Activated B cell treated with CpG ODN at 0.5 μM for 24 hours (primary cell): ENCODE measurements at regions of chr17 and their contacts with region 1.

Region 1: DNA sequence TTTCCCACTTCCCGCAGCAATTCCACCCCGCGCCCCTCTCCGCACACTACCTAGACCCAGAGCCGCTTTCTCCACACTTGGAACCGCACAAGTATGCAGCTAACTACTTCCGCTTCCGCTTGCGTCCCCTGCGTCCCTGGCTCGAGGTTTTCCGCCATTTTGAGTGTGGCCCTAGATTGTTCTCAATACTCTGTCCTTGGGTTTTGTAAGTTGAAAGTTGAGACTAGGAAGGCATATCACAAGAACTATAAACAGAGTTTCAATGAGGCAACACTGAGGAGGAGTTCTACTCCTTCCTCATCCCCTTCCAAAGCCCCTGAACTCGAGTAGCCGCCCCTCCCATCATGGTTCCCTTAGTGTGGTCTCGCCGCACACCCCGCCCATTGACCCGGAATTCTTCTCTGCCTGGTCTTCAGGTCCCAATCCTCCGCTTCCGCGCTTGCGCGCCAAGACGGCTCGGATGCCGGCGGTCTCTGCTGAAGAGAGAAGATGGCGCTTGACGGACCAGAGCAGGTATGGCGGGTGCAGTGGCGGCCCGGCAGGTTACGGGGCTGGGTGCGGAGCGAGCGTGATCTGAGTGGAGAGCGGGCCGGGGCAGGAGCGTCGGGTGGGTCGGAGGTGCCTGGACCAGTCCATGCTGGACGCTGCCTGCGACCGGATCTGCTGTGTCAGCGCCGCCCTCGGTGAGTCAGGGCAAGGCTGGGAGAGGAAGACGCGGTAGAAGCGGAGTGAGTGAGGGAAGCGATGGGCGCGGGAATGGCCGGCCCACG is at the starts of genes FTSJ3 and PSMC5:
- DNase-seq: peak; percentile 90
- ATAC-seq: peak; percentile 95
- H3K4me3 Mint-ChIP-seq: peak within 1 kb of the TSS; percentile 98
- H3K27ac Mint-ChIP-seq: peak within 1 kb of the TSS; percentile 100
- H3K4me1 Mint-ChIP-seq: peaks cover 75% of the 10 kb centered on the region
- H3K27me3 Mint-ChIP-seq: no peaks in the 10 kb centered on the region
- CTCF ChIP-seq: no peak
- total RNA-seq, gene FTSJ3: 82.0 and 85.1 TPM in 2 replicates
- total RNA-seq, gene PSMC5: 157 TPM in 2 replicates

Region 2: DNA sequence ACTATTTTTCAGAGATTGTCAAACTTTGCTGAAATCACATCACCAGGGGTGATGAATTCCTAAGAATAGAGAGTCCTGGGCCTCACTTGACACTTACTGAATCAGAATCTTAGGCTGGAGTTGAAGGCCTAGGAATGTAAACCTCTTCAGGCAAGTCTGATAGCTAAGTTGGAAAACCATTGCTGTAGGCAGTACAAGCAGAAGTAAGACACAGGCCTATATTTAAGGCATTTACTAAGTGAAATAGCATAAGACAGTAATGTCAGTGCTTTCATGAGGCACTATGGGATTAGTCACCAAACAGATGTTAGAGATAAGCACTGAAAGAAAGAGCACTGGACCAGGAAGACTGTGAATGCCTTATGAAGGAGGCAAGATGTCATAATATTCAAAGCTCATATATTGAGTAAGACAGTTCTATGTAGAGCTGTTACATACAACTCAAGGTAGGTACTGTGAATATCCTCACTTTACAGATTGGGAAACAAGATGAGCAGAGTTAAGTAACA is 255.4 kb before region 1 on chr17:
- CTCF ChIA-PET with region 1: no interaction called
- POLR2A ChIA-PET with region 1: no interaction called
- intact Hi-C with region 1: no loop called
- DNase-seq: no peak
- ATAC-seq: no peak
- H3K4me3 Mint-ChIP-seq: no peak overlapping the region
- H3K27ac Mint-ChIP-seq: no peak overlapping the region
- H3K4me1 Mint-ChIP-seq: peaks cover 23% of the 10 kb centered on the region
- H3K27me3 Mint-ChIP-seq: no peaks in the 10 kb centered on the region
- CTCF ChIP-seq: no peak

Region 3: DNA sequence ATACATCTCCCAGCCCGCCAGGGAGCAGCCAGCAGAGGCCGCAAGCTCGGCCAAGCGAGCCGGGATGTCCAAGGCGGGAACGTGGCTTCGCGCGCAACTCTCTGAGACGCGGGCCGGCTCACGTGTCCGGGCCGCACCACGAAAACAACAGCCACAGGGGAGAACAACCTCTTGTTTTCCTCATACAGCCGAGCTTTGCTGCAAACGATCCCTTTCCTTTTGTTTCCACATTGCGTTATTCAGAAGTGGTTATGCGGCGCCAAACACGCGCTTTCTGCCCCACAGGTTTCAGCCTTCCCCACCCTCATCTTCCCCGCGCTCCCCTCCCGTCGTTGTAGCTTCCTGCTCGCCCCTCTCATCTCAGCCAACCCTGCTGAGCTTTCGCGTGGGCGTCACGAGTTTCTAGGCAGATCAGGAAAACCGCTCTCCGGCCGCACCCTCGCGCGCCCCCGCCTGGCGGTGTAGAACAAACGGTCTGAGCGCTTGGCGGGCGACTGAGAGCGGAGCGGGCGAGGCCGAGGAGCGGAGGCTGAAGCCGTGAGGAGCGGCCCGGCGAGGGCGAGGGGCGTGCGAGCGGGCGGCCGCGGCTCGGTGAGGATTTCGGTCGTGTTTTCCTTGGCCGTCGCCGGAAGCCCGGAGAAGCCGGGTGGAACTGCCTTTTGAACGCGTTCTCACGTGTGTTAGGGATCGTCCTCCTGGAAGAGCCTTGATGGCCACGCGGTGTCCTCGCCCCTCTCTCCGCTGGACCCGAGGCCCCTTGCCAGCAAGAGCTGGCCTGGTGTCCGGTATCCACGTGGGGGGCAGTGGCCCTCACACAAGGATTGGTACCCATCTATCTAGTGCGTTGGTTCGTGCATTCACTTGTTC is 21.9 kb after region 1 on chr17:
- CTCF ChIA-PET with region 1: interaction called, 5 read pairs
- POLR2A ChIA-PET with region 1: interaction called, 112 read pairs
- intact Hi-C with region 1: no loop called
- DNase-seq: peak; percentile 92
- ATAC-seq: peak; percentile 98
- H3K4me3 Mint-ChIP-seq: peak overlapping the region; percentile 82
- H3K27ac Mint-ChIP-seq: peak overlapping the region; percentile 89
- H3K4me1 Mint-ChIP-seq: peaks cover 21% of the 10 kb centered on the region
- H3K27me3 Mint-ChIP-seq: no peaks in the 10 kb centered on the region
- CTCF ChIP-seq: no peak

Region 4: GRCh38 chr17:63859257-63859656 is 32.1 kb after region 1 on chr17:
- CTCF ChIA-PET with region 1: no interaction called
- POLR2A ChIA-PET with region 1: no interaction called
- intact Hi-C with region 1: no loop called
- DNase-seq: no peak
- ATAC-seq: no peak
- H3K4me3 Mint-ChIP-seq: no peak overlapping the region
- H3K27ac Mint-ChIP-seq: no peak overlapping the region
- H3K4me1 Mint-ChIP-seq: no peaks in the 10 kb centered on the region
- H3K27me3 Mint-ChIP-seq: peaks cover 9% of the 10 kb centered on the region
- CTCF ChIP-seq: no peak

Region 5: DNA sequence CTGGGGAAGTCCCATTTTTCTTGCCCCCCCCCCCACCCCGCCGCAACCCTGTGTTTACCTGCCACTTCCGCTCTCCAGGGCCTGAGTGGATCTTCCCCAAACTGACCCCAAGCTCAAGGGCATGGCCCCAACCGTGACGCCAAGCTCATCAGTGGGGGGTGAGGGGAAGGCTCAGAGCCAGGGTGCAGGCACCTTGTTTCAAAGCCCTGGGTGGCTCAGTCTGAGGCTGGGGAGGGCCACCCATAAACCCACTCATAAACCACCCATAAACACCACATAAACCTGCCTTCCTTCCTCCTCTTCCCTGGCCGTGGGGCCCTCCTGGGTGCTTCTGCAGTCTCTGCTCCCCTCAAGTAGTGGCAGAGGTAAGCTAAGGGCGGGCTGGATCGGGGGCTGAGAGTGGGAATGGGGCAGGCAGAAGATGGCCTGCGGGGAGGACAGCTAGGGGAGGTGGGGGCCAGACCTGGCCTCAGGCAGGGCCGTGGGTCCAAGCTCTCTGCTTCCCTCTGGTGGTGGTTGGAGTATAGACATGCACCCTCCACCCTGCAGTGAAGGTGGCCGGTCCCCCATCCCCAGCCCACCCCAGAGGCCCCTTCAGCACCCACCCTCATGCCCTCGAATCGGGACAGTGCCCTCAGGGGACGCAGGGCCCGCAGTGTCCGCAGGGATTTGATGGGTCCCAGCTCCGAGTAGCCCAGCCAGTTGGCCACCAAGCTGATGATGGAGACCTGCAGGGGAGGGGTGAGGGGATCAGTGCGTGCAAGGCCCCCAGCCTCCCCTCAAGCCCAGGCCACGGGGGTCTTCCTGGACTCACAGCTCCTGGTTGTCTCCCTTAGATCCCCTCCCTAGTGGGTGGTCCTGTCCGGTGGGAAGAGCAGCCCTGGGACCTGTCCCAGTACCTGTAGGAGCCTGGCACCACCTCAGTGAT is 119.5 kb after region 1 on chr17:
- CTCF ChIA-PET with region 1: no interaction called
- POLR2A ChIA-PET with region 1: no interaction called
- intact Hi-C with region 1: no loop called
- DNase-seq: peak; percentile 67
- ATAC-seq: peak; percentile 72
- H3K4me3 Mint-ChIP-seq: peak overlapping the region; percentile 74
- H3K27ac Mint-ChIP-seq: peak overlapping the region; percentile 91
- H3K4me1 Mint-ChIP-seq: peaks cover 47% of the 10 kb centered on the region
- H3K27me3 Mint-ChIP-seq: no peaks in the 10 kb centered on the region
- CTCF ChIP-seq: no peak

Region 6: GRCh38 chr17:64245218-64246145 is 418.3 kb after region 1 on chr17:
- CTCF ChIA-PET with region 1: no interaction called
- POLR2A ChIA-PET with region 1: no interaction called
- intact Hi-C with region 1: no loop called
- DNase-seq: no peak
- ATAC-seq: no peak
- H3K4me3 Mint-ChIP-seq: no peak overlapping the region
- H3K27ac Mint-ChIP-seq: no peak overlapping the region
- H3K4me1 Mint-ChIP-seq: no peaks in the 10 kb centered on the region
- H3K27me3 Mint-ChIP-seq: no peaks in the 10 kb centered on the region
- CTCF ChIP-seq: no peak